Endothelial cell of umbilical vein (primary cell): ENCODE measurements at regions of chr11 and their contacts with region 1.

Region 1: GRCh38 chr11:65418711-65419459 is 3.7 kb upstream of the NEAT1 start:
- DNase-seq: peak; percentile 97
- H3K4me3 ChIP-seq: peak overlapping the region in 1 of 3 experiments; percentile 27
- H3K27ac ChIP-seq: peak overlapping the region; percentile 99
- H3K4me1 ChIP-seq: peaks cover 55% of the 10 kb centered on the region
- H3K27me3 ChIP-seq: no peaks in the 10 kb centered on the region
- CTCF ChIP-seq: no peak
- POLR2A ChIP-seq: no peak

Region 2: DNA sequence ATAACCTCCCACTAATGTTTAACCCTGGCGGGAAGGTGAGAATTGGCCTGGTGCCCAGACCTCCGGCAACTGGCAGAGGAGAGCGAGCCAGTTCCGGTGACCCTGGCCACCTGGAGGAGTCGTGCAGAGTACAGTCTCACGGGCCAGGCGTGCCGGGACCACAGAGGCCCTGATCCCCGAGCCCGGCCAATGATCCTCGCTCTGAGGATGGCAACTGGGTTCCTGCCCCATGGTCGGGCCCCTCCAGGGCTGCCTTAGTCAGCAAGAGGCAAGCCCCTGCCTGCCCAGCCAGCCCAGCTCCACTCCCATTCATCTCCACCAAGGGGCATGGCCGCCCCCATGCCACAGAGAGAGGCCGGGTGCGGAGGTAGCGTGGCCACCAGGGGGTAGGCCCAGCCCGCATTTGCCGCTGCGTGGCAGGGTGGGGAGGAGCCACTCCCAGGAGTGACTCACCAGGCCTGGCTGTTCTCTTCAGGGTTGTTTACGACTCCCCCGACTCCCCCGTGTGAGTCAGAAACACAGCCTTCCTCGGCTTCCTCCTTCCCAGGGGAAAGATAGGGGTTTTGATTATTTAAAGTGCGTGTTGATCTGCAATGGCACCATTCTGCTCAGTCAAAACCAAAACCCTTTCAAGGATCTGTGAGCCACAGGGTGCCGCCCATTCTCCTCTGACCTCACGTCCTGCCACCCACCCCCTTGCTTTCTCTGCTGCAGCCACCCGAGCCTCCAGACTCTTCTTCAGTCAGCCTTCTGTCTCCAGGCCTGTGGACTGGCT is 36.7 kb before region 1 on chr11 and contains the start of gene SLC25A45:
- CTCF ChIA-PET with region 1: interaction called, 38 read pairs
- POLR2A ChIA-PET with region 1: interaction called, 23 read pairs
- dilution Hi-C with region 1: no loop called
- intact Hi-C with region 1: loop called (anchors 1 kb)
- DNase-seq: peak; percentile 99
- H3K4me3 ChIP-seq: peak within 1 kb of the TSS in 1 of 3 experiments; percentile 20
- H3K27ac ChIP-seq: peak within 1 kb of the TSS; percentile 95
- H3K4me1 ChIP-seq: peaks cover 41% of the 10 kb centered on the region
- H3K27me3 ChIP-seq: no peaks in the 10 kb centered on the region
- CTCF ChIP-seq: peak; percentile 89 to 90
- POLR2A ChIP-seq: peak; percentile 84
- total RNA-seq, gene SLC25A45: 3.1 and 4.8 TPM in 2 replicates

Region 3: DNA sequence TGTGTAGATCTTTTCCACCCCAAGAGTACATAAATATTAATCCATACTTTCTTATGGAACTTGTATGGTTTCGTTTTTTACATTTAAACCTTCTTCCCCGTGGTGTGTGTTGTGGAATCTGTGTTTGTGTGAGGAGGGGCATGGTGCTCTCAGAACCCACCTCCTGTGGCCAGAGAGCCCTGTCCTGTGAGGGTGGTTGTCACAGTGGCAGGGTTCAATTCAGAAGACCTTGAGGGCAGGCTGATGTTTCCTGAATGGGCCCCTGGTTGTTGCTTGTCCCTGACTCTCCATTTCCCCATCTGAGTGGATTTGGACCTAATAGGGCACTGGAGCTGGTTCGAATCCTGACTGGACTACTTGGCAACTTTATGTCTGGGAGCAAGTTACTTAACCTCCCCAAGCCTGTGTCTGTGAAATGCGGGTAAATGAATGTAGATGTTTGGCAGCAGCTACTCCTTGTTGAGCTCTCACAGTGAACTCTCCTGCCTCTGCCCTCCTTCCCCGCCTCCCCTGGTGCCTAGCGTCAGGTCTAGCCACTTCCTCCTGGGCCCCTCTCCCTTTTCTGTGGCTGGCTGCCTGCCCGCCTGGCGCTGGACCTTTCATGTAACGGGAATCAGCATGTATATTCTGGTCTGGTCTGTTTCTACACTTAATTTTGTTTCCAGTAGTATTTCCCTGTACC is 11.0 kb after region 1 on chr11:
- CTCF ChIA-PET with region 1: interaction called, 9 read pairs
- POLR2A ChIA-PET with region 1: interaction called, 23 read pairs
- dilution Hi-C with region 1: no loop called
- intact Hi-C with region 1: loop called (anchors 1 kb)
- DNase-seq: peak; percentile 79
- H3K4me3 ChIP-seq: peak overlapping the region in 2 of 3 experiments; percentile 16 to 95
- H3K27ac ChIP-seq: peak overlapping the region; percentile 45
- H3K4me1 ChIP-seq: peaks cover 45% of the 10 kb centered on the region
- H3K27me3 ChIP-seq: no peaks in the 10 kb centered on the region
- CTCF ChIP-seq: no peak
- POLR2A ChIP-seq: no peak

Region 4: DNA sequence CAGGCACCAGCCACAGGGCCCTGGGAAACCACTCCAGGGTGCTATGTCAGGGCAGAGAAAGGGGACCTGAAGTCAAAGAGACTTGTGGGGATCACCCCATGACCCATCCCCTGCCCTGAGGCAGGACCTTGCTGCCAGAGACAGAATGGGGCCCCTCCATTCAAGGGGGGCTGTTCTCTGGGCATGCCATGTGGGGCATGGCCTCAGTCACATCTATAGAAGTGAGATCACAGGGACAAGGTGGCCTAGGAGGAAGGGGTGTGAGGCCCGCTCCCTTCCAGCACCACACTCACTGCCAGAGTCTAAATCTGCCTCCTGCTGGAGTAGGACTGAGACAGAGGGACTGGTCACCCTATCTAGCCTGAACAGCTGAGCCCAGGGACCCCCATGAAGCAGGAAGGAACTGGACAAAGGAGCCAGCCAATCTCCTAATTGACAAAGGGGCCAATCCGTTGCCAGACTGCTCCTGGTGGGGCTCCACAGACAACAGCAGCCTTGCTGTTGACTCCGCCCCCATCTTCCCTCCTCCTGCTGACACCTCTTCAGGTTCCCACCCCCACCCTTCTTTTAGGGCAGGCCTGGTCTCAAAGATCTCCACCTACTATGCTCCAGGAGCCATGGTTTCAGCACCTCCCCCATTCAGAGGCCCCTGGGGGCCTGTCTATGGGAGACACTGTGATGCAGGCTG is 29.7 kb after region 1 on chr11:
- CTCF ChIA-PET with region 1: interaction called, 12 read pairs
- POLR2A ChIA-PET with region 1: no interaction called
- dilution Hi-C with region 1: no loop called
- intact Hi-C with region 1: no loop called
- DNase-seq: peak; percentile 37
- H3K4me3 ChIP-seq: no peak overlapping the region
- H3K27ac ChIP-seq: no peak overlapping the region
- H3K4me1 ChIP-seq: no peaks in the 10 kb centered on the region
- H3K27me3 ChIP-seq: no peaks in the 10 kb centered on the region
- CTCF ChIP-seq: no peak
- POLR2A ChIP-seq: peak; percentile 56

Region 5: DNA sequence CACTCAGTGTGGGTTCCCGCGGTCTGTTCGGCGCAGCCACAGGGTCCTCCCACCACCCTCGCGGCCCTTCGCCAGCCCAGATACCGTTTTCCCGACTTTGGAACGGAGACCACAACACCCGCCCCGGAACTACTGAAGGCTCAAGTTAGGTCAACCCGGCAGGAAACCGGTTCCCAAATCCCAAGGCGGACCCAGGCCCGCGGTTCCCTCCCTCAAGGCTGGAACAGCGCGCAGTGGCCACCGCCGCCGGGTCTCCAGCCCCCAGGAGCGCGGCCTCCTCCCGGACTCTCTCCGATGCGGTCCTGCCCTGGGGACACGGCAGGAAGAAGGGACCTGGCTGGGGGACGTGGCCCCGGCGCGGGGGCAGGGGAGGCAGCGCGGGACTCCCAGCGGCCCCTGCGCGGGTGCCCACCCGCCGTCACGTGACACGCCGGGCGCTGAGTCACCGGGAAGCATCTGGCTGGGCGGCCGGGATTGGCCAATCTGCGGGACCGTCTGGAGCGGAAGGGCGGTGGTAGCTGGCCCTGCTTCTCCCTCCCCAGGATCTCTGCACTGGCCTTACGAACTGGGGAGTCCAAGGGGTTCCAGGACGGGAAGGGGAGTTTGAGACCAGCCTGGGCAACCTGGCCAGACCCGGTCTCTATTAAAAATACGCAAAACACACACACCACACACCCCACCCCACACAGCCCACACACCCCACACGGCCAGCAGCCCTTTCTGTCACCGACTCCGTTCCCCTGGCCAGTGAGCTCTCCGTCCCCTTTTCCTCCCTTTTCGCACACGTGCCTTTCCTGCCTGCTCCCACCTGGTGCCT is 58.5 kb after region 1 on chr11:
- CTCF ChIA-PET with region 1: interaction called, 8 read pairs
- POLR2A ChIA-PET with region 1: interaction called, 10 read pairs
- dilution Hi-C with region 1: no loop called
- intact Hi-C with region 1: loop called (anchors 1 kb)
- DNase-seq: peak; percentile 94
- H3K4me3 ChIP-seq: peak overlapping the region; percentile 35 to 56 (median 54)
- H3K27ac ChIP-seq: peak overlapping the region; percentile 88
- H3K4me1 ChIP-seq: peaks cover 26% of the 10 kb centered on the region
- H3K27me3 ChIP-seq: no peaks in the 10 kb centered on the region
- CTCF ChIP-seq: no peak
- POLR2A ChIP-seq: peak; percentile 95

Region 6: DNA sequence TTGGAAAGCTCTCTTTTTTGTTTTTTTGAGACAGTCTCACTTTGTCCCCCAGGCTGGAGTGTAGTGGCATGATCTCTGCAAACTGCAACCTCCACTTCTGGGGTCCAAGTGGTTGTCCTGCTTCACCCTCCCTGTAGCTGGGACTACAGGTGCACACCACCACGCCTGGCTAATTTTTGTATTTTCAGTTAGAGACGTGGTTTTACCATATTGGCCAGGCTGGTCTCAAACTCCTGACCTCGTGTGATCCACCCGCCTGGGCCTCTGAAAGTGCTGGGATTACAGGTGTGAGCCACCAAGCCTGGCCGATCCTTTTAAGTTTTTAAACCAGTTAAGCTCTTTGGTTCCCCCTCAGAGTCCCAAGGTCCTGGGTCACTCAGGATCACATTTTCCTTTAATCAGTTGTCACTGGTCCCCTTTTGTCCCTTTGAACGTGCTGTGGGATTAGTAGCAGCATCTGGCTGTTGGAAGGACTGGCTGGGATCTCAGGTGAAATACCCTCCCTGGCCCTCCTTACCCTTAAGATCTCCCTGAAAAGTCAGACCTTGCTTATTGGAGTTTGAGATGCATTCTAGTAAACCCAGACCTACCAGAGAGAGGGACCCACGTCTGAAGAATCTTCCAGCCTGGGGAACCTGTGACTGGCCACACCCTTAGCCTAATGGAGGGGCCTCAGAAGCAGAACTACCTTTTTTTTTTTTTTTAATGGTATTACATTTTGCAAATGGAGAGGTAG is 88.1 kb after region 1 on chr11:
- CTCF ChIA-PET with region 1: interaction called, 105 read pairs
- POLR2A ChIA-PET with region 1: interaction called, 127 read pairs
- dilution Hi-C with region 1: no loop called
- intact Hi-C with region 1: loop called (anchors 1 kb)
- DNase-seq: peak; percentile 61
- H3K4me3 ChIP-seq: peak overlapping the region in 2 of 3 experiments; percentile 91 to 98
- H3K27ac ChIP-seq: peak overlapping the region; percentile 89
- H3K4me1 ChIP-seq: peaks cover 24% of the 10 kb centered on the region
- H3K27me3 ChIP-seq: no peaks in the 10 kb centered on the region
- CTCF ChIP-seq: no peak
- POLR2A ChIP-seq: peak; percentile 87

Region 7: GRCh38 chr11:65546217-65546958 is 127.5 kb after region 1 on chr11:
- CTCF ChIA-PET with region 1: no interaction called
- POLR2A ChIA-PET with region 1: no interaction called
- dilution Hi-C with region 1: no loop called
- intact Hi-C with region 1: no loop called
- DNase-seq: peak; percentile 44
- H3K4me3 ChIP-seq: no peak overlapping the region
- H3K27ac ChIP-seq: no peak overlapping the region
- H3K4me1 ChIP-seq: peaks cover 1% of the 10 kb centered on the region
- H3K27me3 ChIP-seq: no peaks in the 10 kb centered on the region
- CTCF ChIP-seq: no peak
- POLR2A ChIP-seq: no peak